H1 (cell line): ENCODE measurements at regions of chr22 and their contacts with region 1.

Region 1: GRCh38 chr22:39170825-39171622 is 18.5 kb upstream of the CBX7 start:
- DNase-seq: peak in 1 of 2 experiments; percentile 98
- H3K4me3 ChIP-seq: no peak overlapping the region
- H3K27ac ChIP-seq: no peak overlapping the region; the same call in 1 of the 2 replicates
- H3K4me1 ChIP-seq: peaks cover 15 to 42% (median 35%) of the 10 kb centered on the region in 4 experiments
- H3K27me3 ChIP-seq: no peaks in the 10 kb centered on the region
- CTCF ChIP-seq: peak; percentile 88 to 95 (median 89)
- EP300 ChIP-seq: no peak
- POLR2A ChIP-seq: no peak
- RAD21 ChIP-seq: peak; percentile 97 to 99

Region 2: DNA sequence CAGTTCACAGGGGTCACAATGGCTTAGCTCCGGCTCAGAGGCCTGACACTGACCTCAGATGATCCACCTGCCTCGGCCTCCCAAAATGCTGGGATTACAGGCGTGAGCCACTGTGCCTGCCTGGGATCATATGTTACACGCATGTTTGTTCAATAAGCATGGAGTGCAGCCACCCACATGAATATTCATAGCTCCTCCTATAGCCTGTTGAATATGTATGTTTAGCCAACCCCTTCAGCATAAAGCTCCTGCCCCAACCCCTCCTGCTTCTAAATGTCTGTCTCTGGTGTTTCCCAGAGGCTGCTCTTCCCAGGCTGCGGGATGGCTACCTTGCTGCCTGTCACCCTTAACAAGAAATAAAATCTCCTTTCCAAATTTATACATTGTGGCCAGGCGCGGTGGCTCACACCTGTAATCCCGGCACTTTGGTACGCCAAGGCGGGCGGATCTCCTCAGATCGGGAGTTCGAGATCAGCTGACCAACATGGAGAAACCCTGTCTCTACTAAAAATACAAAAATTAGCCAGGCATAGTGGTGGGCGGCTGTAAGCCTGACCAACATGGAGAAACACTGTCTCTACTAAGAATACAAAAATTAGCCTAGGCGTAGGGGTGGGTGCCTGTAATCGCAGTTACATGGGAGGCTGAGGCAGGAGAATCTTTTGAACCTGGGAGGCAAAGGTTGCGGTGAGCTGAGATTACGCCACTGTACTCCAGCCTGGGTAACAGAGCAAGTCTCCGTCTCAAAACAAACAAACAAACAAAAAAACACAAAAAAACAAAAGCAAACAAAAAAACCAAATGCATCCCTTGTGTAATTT is 131.5 kb before region 1 on chr22:
- CTCF ChIA-PET with region 1: no interaction called
- POLR2A ChIA-PET with region 1: no interaction called
- DNase-seq: no peak
- H3K4me3 ChIP-seq: peak overlapping the region in 1 of 4 experiments; percentile 54; a peak in 2 of 8 replicates
- H3K27ac ChIP-seq: no peak overlapping the region
- H3K4me1 ChIP-seq: peaks cover 3 to 15% (median 10%) of the 10 kb centered on the region in 4 experiments
- H3K27me3 ChIP-seq: no peaks in the 10 kb centered on the region
- CTCF ChIP-seq: no peak
- EP300 ChIP-seq: no peak
- POLR2A ChIP-seq: no peak
- RAD21 ChIP-seq: no peak

Region 3: DNA sequence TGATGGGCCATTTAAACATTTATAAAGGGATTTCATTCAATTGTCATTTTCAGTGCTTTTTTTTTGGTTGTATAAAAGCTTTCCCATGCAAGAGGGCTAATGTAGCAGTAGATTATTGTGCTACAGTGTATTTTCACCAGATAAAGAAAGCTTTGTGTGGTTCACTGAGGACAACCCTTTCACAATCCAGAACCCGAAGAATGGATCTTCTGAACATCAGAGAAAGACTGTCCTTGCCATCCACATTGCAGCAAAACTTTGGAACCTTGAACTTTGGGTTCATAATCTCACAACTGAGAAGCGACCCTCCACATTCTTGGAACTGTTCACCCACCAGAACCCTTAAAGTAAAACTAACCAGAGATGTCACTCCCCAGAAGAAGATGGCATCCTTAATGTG is 64.7 kb before region 1 on chr22:
- CTCF ChIA-PET with region 1: no interaction called
- POLR2A ChIA-PET with region 1: no interaction called
- DNase-seq: no peak
- H3K4me3 ChIP-seq: no peak overlapping the region
- H3K27ac ChIP-seq: no peak overlapping the region
- H3K4me1 ChIP-seq: peaks cover 1 to 6% (median 3%) of the 10 kb centered on the region in 4 experiments; a peak in 5 of 7 replicates
- H3K27me3 ChIP-seq: no peaks in the 10 kb centered on the region
- CTCF ChIP-seq: no peak
- EP300 ChIP-seq: no peak
- POLR2A ChIP-seq: no peak
- RAD21 ChIP-seq: no peak

Region 4: GRCh38 chr22:39135090-39135896 is 35.7 kb before region 1 on chr22:
- CTCF ChIA-PET with region 1: interaction called, 37 read pairs
- POLR2A ChIA-PET with region 1: no interaction called
- DNase-seq: peak; percentile 50 to 90
- H3K4me3 ChIP-seq: no peak overlapping the region
- H3K27ac ChIP-seq: no peak overlapping the region
- H3K4me1 ChIP-seq: peaks cover 4 to 17% (median 11%) of the 10 kb centered on the region in 4 experiments; a peak in 4 of 7 replicates
- H3K27me3 ChIP-seq: no peaks in the 10 kb centered on the region
- CTCF ChIP-seq: peak; percentile 85 to 92 (median 92)
- EP300 ChIP-seq: no peak
- POLR2A ChIP-seq: no peak
- RAD21 ChIP-seq: peak; percentile 88 to 94

Region 5: DNA sequence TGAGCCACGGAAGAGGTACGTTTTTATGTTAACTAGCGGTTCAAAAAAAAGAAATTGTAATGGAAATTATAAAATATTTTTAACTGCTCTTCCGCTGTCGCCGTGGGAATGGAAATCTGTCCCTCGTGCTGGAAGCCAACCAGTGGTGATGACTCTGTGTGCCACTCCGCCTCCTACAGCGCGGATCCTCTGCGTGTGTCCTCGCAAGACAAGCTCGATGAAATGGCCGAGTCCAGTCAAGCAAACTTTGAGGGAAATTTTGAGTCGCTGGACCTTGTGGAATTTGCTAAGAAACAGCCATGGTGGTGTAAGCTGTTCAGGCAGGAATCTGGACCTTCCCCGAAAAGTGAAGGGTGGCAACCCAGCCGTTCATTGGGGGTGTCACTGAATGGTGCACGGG is 15.6 kb before region 1 on chr22:
- CTCF ChIA-PET with region 1: interaction called, 16 read pairs
- POLR2A ChIA-PET with region 1: interaction called, 5 read pairs
- DNase-seq: no peak
- H3K4me3 ChIP-seq: no peak overlapping the region
- H3K27ac ChIP-seq: no peak overlapping the region
- H3K4me1 ChIP-seq: peaks cover 0 to 12% (median 9%) of the 10 kb centered on the region in 4 experiments; a peak in 6 of 7 replicates
- H3K27me3 ChIP-seq: peaks cover 0 to 18% (median 13%) of the 10 kb centered on the region in 4 experiments; a peak in 6 of 7 replicates
- CTCF ChIP-seq: no peak
- EP300 ChIP-seq: no peak
- POLR2A ChIP-seq: no peak
- RAD21 ChIP-seq: no peak

Region 6: DNA sequence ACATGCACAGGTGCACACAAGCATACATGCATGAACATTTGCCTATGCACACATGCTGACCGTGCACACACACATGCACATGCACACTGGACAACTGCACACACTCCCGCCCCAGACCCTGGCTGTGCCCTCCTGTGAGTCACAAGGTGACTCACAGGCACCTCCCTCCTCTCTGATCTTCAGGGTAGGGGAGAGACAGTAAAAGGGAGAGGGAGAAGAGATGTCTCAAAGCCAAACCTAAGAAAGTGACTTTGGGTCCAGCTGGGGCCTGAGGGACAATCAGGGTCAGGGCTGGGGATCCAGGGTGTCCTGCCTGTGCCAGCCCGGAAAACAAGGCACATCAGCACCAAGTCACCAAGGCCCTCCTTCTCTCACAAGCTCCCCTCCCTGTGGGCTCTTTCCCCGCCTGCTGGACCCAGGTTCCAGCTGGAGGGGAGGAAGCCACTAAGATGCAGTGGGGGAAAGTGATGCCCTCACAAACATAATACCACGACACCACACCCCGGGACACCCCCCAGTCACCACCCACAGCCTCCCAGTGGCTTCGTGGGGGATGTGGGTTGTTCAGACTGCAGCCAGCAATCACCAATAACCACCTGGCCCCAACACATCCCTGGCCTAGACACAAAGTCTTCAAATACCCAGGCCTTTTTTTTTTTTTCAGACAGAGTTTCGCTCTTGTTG is 34.5 kb after region 1 on chr22:
- CTCF ChIA-PET with region 1: interaction called, 5 read pairs
- POLR2A ChIA-PET with region 1: interaction called, 20 read pairs
- DNase-seq: no peak
- H3K4me3 ChIP-seq: no peak overlapping the region
- H3K27ac ChIP-seq: no peak overlapping the region
- H3K4me1 ChIP-seq: peaks cover 0 to 9% (median 4%) of the 10 kb centered on the region in 4 experiments; a peak in 5 of 7 replicates
- H3K27me3 ChIP-seq: no peaks in the 10 kb centered on the region
- CTCF ChIP-seq: no peak
- EP300 ChIP-seq: no peak
- POLR2A ChIP-seq: no peak
- RAD21 ChIP-seq: no peak

Region 7: GRCh38 chr22:39220897-39221850 is 50.1 kb after region 1 on chr22:
- CTCF ChIA-PET with region 1: interaction called, 35 read pairs
- POLR2A ChIA-PET with region 1: interaction called, 79 read pairs
- DNase-seq: no peak
- H3K4me3 ChIP-seq: no peak overlapping the region
- H3K27ac ChIP-seq: no peak overlapping the region
- H3K4me1 ChIP-seq: peaks cover 0 to 4% (median 1%) of the 10 kb centered on the region in 4 experiments; a peak in 4 of 7 replicates
- H3K27me3 ChIP-seq: no peaks in the 10 kb centered on the region
- CTCF ChIP-seq: no peak
- EP300 ChIP-seq: no peak
- POLR2A ChIP-seq: no peak
- RAD21 ChIP-seq: no peak

Region 8: DNA sequence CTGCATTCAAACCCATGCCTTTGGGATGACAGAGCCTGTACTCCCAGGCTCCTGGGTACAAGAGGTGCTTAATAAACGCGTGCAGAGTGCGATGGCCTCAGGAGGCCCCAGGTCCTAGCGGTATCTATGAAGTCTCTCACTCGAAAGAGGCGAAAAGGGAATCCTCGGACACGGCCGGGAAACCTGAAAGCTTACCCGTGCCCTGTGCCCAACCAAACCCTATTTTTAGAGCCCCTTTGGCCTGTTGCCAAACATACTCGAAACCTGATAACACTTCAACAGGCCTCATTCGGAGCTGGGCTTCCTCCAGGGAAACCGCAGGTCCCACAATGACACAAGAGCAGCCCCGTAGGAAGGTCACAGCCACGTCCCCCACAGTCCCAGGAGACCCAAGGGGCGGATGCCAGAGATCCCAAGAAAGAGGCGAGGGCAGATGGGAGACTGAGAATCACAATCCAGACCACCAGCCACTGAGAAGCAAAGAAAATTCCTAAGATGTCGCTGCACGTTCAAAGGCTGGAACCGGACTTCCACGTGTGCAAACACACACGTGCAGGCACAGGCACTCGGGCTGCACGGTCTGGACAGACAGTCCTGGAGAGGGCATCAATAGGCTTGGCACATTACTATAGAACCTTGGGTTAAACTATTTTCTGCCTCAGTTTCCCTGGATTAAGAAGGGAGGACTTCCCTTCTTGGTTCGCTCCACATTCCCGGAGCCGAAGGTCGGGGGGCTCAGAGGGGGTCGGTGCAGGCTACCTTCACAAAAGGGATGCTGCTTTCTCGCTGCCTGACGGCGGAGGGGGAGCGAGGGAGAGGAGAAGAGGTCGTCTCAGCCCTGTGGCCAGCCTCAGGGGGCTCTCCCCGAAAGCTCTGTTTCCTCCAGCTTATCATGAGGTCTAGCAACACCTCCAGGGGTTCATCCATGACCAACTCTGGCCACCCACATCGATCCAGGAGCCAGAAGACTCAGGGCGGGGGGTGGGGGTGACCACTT is 65.6 kb after region 1 on chr22:
- CTCF ChIA-PET with region 1: interaction called, 19 read pairs
- POLR2A ChIA-PET with region 1: interaction called, 16 read pairs
- DNase-seq: no peak
- H3K4me3 ChIP-seq: no peak overlapping the region
- H3K27ac ChIP-seq: no peak overlapping the region
- H3K4me1 ChIP-seq: peaks cover 4 to 33% (median 28%) of the 10 kb centered on the region in 4 experiments
- H3K27me3 ChIP-seq: peaks cover 0 to 28% (median 16%) of the 10 kb centered on the region in 4 experiments; a peak in 5 of 7 replicates
- CTCF ChIP-seq: no peak
- EP300 ChIP-seq: no peak
- POLR2A ChIP-seq: no peak
- RAD21 ChIP-seq: no peak

Region 9: GRCh38 chr22:39306581-39307361 is 135.7 kb after region 1 on chr22:
- CTCF ChIA-PET with region 1: interaction called, 80 read pairs
- POLR2A ChIA-PET with region 1: interaction called, 313 read pairs
- DNase-seq: peak in 1 of 2 experiments; percentile 83
- H3K4me3 ChIP-seq: no peak overlapping the region
- H3K27ac ChIP-seq: no peak overlapping the region
- H3K4me1 ChIP-seq: peaks cover 0 to 14% (median 11%) of the 10 kb centered on the region in 4 experiments; a peak in 5 of 7 replicates
- H3K27me3 ChIP-seq: no peaks in the 10 kb centered on the region
- CTCF ChIP-seq: peak; percentile 82 to 86 (median 83)
- EP300 ChIP-seq: no peak
- POLR2A ChIP-seq: no peak
- RAD21 ChIP-seq: peak; percentile 84 to 87